Dendritic cell treated with granulocyte-macrophage colony-stimulating factor and Interleukin-4, amounts not matched to agents 40 ng/mL and 50 ng/mL, for 4 days (primary cell): ENCODE measurements at regions of chr18 and their contacts with region 1.

Region 1: GRCh38 chr18:286515-287310 is 18.9 kb upstream of the THOC1 start:
- H3K4me3 Mint-ChIP-seq: no peak overlapping the region
- H3K27ac Mint-ChIP-seq: no peak overlapping the region
- H3K4me1 Mint-ChIP-seq: peaks cover 40% of the 10 kb centered on the region
- H3K27me3 Mint-ChIP-seq: no peaks in the 10 kb centered on the region

Region 2: GRCh38 chr18:111292-112014 is 175.3 kb before region 1 on chr18:
- intact Hi-C with region 1: no loop called
- H3K4me3 Mint-ChIP-seq: peak overlapping the region; percentile 72
- H3K27ac Mint-ChIP-seq: peak overlapping the region; percentile 67
- H3K4me1 Mint-ChIP-seq: no peaks in the 10 kb centered on the region
- H3K27me3 Mint-ChIP-seq: peaks cover 11% of the 10 kb centered on the region

Region 3: GRCh38 chr18:158128-159036 is 128.3 kb before region 1 on chr18 and contains the start of gene USP14:
- intact Hi-C with region 1: no loop called
- H3K4me3 Mint-ChIP-seq: peak within 1 kb of the TSS; percentile 91
- H3K27ac Mint-ChIP-seq: peak within 1 kb of the TSS; percentile 93
- H3K4me1 Mint-ChIP-seq: peaks cover 26% of the 10 kb centered on the region
- H3K27me3 Mint-ChIP-seq: no peaks in the 10 kb centered on the region

Region 4: GRCh38 chr18:323253-323622 is 36.5 kb after region 1 on chr18:
- intact Hi-C with region 1: loop called (anchors 5 kb)
- H3K4me3 Mint-ChIP-seq: no peak overlapping the region
- H3K27ac Mint-ChIP-seq: peak overlapping the region; percentile 73
- H3K4me1 Mint-ChIP-seq: peaks cover 16% of the 10 kb centered on the region
- H3K27me3 Mint-ChIP-seq: no peaks in the 10 kb centered on the region

Region 5: GRCh38 chr18:499551-500408 is 213.1 kb after region 1 on chr18:
- intact Hi-C with region 1: loop called (anchors 5 kb)
- H3K4me3 Mint-ChIP-seq: peak overlapping the region; percentile 86
- H3K27ac Mint-ChIP-seq: peak overlapping the region; percentile 66
- H3K4me1 Mint-ChIP-seq: peaks cover 32% of the 10 kb centered on the region
- H3K27me3 Mint-ChIP-seq: peaks cover 62% of the 10 kb centered on the region

Region 6: DNA sequence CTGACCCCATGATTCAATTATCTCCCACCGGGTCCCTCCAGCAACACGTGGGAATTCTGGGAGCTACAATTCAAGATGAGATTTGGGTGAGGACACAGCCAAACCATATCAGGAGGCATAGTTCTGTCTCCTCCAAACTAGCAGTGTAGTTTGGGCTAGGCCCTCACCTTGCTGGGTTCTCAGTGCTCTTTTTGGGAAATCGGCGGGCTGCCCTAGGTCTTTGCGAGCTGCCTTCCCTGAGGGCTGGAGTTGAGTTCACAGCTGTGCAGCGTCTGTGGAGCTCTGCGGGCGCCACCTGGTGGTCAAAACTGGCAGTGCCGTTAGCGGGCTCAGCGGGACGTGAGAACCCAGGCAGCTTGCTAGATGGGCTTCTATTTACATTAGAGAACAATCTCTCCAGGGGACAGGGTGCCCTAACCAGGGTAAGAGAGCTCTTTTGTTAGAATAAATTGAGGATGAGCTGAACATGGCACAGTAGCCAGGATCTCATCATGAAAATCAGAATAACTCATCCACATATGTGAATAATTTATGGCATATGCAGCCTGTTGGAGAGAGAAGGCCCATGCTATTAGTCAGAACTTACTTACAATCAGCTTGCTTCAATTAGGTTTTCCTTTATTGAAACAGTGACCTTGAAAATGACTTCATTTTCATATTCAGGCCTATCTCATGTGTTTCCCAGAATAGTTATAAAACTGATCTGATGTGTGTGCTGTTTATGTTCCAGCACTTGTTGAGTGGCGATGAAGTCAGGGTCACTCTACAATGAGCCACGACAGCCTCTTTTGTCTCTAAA is 552.7 kb after region 1 on chr18:
- intact Hi-C with region 1: loop called (anchors 10 kb)
- H3K4me3 Mint-ChIP-seq: no peak overlapping the region
- H3K27ac Mint-ChIP-seq: no peak overlapping the region
- H3K4me1 Mint-ChIP-seq: no peaks in the 10 kb centered on the region
- H3K27me3 Mint-ChIP-seq: peaks cover 64% of the 10 kb centered on the region